ENCODE measurements at regions of chrX and their contacts with region 1.

Region 1: DNA sequence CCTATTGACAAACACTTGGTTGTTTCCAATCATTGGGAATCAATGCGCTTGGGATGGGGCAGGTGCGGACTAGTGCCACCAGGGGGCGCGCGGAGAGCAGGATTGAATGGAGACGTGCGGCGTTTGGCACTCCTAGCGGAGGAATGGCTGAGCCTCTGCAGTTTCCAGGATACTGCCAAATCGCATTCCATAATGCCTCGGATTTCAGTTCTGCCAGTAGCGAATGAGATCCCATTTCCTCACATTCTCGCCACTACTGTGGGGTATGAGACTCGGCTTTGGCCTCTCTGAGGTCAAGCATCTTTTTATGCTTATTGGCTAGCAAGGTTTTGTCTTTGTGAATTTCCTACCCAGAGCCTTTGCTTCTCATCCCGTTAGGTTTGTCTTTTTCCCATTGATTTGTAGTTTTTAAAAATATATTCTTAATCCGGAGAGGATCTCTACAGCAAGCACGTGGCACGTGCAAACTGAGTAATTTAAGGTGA is 28.7 kb downstream of the CLDN34 start:
- DNase-seq: peak; percentile 57 to 86 (median 72)
- ATAC-seq: peak; percentile 86
- H3K4me3 ChIP-seq: no peak overlapping the region
- H3K4me3 Mint-ChIP-seq: no peak overlapping the region
- H3K27ac ChIP-seq: no peak overlapping the region
- H3K27ac Mint-ChIP-seq: no peak overlapping the region
- H3K4me1 ChIP-seq: peaks cover 3% of the 10 kb centered on the region
- H3K4me1 Mint-ChIP-seq: no peaks in the 10 kb centered on the region
- H3K27me3 ChIP-seq: no peaks in the 10 kb centered on the region
- H3K27me3 Mint-ChIP-seq: no peaks in the 10 kb centered on the region
- CTCF ChIP-seq: peak; percentile 91

Region 2: DNA sequence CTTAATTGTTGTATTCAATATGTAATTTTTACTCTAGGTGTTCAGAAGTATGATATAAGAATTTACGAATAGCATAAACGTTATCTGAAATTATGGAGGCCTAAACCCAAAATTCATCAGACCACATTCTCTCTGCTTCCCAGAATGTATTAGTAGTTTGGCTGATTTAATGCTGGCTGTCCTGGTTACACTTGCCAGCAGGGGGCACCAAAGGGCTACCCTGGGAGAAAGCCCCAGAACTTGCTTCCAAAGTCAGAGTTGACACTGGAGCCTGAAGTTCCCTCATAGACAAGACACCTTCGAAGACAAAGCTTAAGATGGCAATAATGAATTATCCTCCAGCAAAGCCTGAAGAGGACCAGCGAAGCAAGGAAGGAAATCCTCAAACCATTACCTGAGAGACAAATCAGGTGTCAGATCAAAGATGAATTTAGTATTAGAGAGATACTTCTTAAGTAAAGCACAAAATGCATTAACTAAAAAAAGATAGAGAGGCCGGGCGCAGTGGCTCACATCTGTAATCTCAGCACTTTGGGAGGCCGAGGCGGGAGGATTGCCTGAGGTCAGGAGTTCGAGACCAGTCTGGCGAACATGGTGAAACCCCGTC is 1252.7 kb before region 1 on chrX:
- CTCF ChIA-PET with region 1: no interaction called
- POLR2A ChIA-PET with region 1: no interaction called
- intact Hi-C with region 1: loop called (anchors 2 to 10 kb)
- DNase-seq: peak; percentile 27 to 74 (median 52)
- ATAC-seq: peak; percentile 46
- H3K4me3 ChIP-seq: no peak overlapping the region
- H3K4me3 Mint-ChIP-seq: no peak overlapping the region
- H3K27ac ChIP-seq: no peak overlapping the region
- H3K27ac Mint-ChIP-seq: no peak overlapping the region
- H3K4me1 ChIP-seq: no peaks in the 10 kb centered on the region
- H3K4me1 Mint-ChIP-seq: no peaks in the 10 kb centered on the region
- H3K27me3 ChIP-seq: peaks cover 0 to 2% of the 10 kb centered on the region in 2 experiments
- H3K27me3 Mint-ChIP-seq: peaks cover 11% of the 10 kb centered on the region
- CTCF ChIP-seq: peak; percentile 71

Region 3: DNA sequence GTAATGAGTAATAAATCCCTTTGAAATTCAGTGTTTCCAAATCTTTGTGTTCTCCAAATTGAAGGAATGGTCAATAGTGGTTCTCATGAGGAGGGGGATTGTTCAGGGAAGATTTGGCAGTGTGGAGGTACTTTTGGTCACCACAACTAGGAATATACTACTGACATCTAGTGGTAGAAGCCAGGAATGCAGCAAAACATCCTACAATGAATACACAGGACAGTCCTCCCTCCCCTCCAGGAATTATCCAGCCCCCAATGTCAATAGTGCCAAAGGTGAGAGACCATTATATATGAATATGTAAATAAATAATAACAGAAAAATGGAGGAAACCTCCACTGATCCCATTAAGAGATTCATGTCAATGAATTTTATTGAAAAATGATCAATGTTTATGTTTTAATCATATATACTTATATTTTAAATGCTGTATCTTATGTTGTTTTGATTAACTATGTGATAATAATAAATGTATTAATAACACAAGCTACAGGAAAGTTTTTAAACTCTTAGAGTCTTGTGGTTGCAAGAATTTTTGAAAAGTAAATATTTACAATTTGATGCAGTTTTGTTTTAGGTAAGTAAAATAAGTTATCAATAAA is 1180.3 kb before region 1 on chrX:
- CTCF ChIA-PET with region 1: no interaction called
- POLR2A ChIA-PET with region 1: no interaction called
- intact Hi-C with region 1: loop called in 1 of 2 experiments (anchors 10 kb)
- DNase-seq: peak in 5 of 14 experiments; percentile 5 to 51 (median 49)
- ATAC-seq: no peak
- H3K4me3 ChIP-seq: no peak overlapping the region
- H3K4me3 Mint-ChIP-seq: no peak overlapping the region
- H3K27ac ChIP-seq: no peak overlapping the region
- H3K27ac Mint-ChIP-seq: no peak overlapping the region
- H3K4me1 ChIP-seq: no peaks in the 10 kb centered on the region
- H3K4me1 Mint-ChIP-seq: no peaks in the 10 kb centered on the region
- H3K27me3 ChIP-seq: no peaks in the 10 kb centered on the region
- H3K27me3 Mint-ChIP-seq: peaks cover 5% of the 10 kb centered on the region
- CTCF ChIP-seq: peak; percentile 69

Region 4: GRCh38 chrX:9873952-9874351 is 121.9 kb before region 1 on chrX:
- CTCF ChIA-PET with region 1: no interaction called
- POLR2A ChIA-PET with region 1: no interaction called
- intact Hi-C with region 1: loop called in 1 of 2 experiments (anchors 2 kb)
- DNase-seq: peak; percentile 4 to 61 (median 24)
- ATAC-seq: peak; percentile 71
- H3K4me3 ChIP-seq: no peak overlapping the region
- H3K4me3 Mint-ChIP-seq: no peak overlapping the region
- H3K27ac ChIP-seq: no peak overlapping the region
- H3K27ac Mint-ChIP-seq: no peak overlapping the region
- H3K4me1 ChIP-seq: no peaks in the 10 kb centered on the region
- H3K4me1 Mint-ChIP-seq: peaks cover 23% of the 10 kb centered on the region
- H3K27me3 ChIP-seq: no peaks in the 10 kb centered on the region
- H3K27me3 Mint-ChIP-seq: peaks cover 17% of the 10 kb centered on the region
- CTCF ChIP-seq: peak; percentile 31

Region 5: GRCh38 chrX:10014462-10015356 is 18.8 kb after region 1 on chrX:
- CTCF ChIA-PET with region 1: no interaction called
- POLR2A ChIA-PET with region 1: no interaction called
- intact Hi-C with region 1: loop called in 1 of 2 experiments (anchors 2 kb)
- DNase-seq: peak; percentile 55 to 90 (median 68)
- ATAC-seq: peak; percentile 90
- H3K4me3 ChIP-seq: peak overlapping the region; percentile 64
- H3K4me3 Mint-ChIP-seq: peak overlapping the region; percentile 58
- H3K27ac ChIP-seq: peak overlapping the region in 1 of 2 donors; percentile 13
- H3K27ac Mint-ChIP-seq: no peak overlapping the region
- H3K4me1 ChIP-seq: peaks cover 39% of the 10 kb centered on the region
- H3K4me1 Mint-ChIP-seq: peaks cover 33% of the 10 kb centered on the region
- H3K27me3 ChIP-seq: no peaks in the 10 kb centered on the region
- H3K27me3 Mint-ChIP-seq: no peaks in the 10 kb centered on the region
- CTCF ChIP-seq: no peak

Region 6: GRCh38 chrX:10052906-10053625 is 57.2 kb after region 1 on chrX:
- CTCF ChIA-PET with region 1: no interaction called
- POLR2A ChIA-PET with region 1: no interaction called
- intact Hi-C with region 1: loop called in 1 of 2 experiments (anchors 10 kb)
- DNase-seq: no peak
- ATAC-seq: no peak
- H3K4me3 ChIP-seq: no peak overlapping the region
- H3K4me3 Mint-ChIP-seq: no peak overlapping the region
- H3K27ac ChIP-seq: no peak overlapping the region
- H3K27ac Mint-ChIP-seq: no peak overlapping the region
- H3K4me1 ChIP-seq: no peaks in the 10 kb centered on the region
- H3K4me1 Mint-ChIP-seq: no peaks in the 10 kb centered on the region
- H3K27me3 ChIP-seq: no peaks in the 10 kb centered on the region
- H3K27me3 Mint-ChIP-seq: no peaks in the 10 kb centered on the region
- CTCF ChIP-seq: no peak

Region 7: GRCh38 chrX:10507181-10507580 is 511.3 kb after region 1 on chrX:
- CTCF ChIA-PET with region 1: no interaction called
- POLR2A ChIA-PET with region 1: no interaction called
- intact Hi-C with region 1: no loop called
- DNase-seq: no peak
- ATAC-seq: no peak
- H3K4me3 ChIP-seq: no peak overlapping the region
- H3K4me3 Mint-ChIP-seq: no peak overlapping the region
- H3K27ac ChIP-seq: no peak overlapping the region
- H3K27ac Mint-ChIP-seq: no peak overlapping the region
- H3K4me1 ChIP-seq: no peaks in the 10 kb centered on the region
- H3K4me1 Mint-ChIP-seq: no peaks in the 10 kb centered on the region
- H3K27me3 ChIP-seq: no peaks in the 10 kb centered on the region
- H3K27me3 Mint-ChIP-seq: no peaks in the 10 kb centered on the region
- CTCF ChIP-seq: no peak